Activated CD4-positive, alpha-beta memory T cell treated with anti-CD3 and anti-CD28 coated beads for 36 hours (primary cell): ENCODE measurements at regions of chr20 and their contacts with region 1.

Region 1: DNA sequence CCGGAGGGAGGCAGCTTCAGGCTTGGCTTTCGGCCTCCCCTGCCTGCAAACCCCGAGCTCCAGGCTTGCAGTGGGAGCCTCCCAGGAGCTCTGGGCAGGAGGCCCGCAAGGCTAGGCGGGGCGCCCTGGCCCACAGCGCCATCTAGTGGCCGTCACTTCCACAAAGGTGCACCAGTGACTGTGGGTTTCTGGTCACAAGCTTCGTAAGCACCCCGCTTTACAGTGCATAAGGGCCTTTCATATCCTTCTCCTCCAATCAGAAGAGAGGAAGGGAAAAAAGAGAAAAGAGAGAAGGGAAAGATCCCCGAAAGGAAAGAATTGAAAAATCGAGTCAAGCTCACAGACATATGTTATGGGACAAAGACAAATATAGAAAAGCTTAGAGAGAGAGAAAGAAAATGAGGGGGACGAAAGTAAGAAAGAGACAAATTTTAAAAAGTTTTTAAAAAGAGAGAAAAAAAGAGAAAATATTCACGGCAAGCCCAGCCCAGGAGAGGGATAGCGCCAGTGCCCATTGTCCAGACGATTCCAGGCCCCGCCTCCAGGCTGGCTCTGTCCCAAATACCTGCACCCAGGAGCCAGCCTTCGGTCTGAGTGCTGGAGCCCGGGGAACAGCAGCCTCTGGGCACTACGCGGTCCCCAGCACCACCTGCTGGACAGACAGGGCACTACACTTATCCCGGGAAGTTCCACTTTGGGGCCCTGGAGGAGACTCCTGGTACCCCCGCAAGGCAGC is 207.1 kb downstream of the PREX1 start:
- DNase-seq: peak; percentile 83
- H3K4me3 Mint-ChIP-seq: peak overlapping the region; percentile 20
- H3K27ac Mint-ChIP-seq: no peak overlapping the region
- H3K4me1 Mint-ChIP-seq: peaks cover 12% of the 10 kb centered on the region
- H3K27me3 Mint-ChIP-seq: no peaks in the 10 kb centered on the region

Region 2: GRCh38 chr20:47677635-47678453 is 942.8 kb before region 1 on chr20:
- CTCF ChIA-PET with region 1: interaction called, 67 read pairs
- POLR2A ChIA-PET with region 1: no interaction called
- intact Hi-C with region 1: loop called (anchors 1 kb)
- DNase-seq: peak; percentile 78
- H3K4me3 Mint-ChIP-seq: no peak overlapping the region
- H3K27ac Mint-ChIP-seq: no peak overlapping the region
- H3K4me1 Mint-ChIP-seq: no peaks in the 10 kb centered on the region
- H3K27me3 Mint-ChIP-seq: no peaks in the 10 kb centered on the region

Region 3: DNA sequence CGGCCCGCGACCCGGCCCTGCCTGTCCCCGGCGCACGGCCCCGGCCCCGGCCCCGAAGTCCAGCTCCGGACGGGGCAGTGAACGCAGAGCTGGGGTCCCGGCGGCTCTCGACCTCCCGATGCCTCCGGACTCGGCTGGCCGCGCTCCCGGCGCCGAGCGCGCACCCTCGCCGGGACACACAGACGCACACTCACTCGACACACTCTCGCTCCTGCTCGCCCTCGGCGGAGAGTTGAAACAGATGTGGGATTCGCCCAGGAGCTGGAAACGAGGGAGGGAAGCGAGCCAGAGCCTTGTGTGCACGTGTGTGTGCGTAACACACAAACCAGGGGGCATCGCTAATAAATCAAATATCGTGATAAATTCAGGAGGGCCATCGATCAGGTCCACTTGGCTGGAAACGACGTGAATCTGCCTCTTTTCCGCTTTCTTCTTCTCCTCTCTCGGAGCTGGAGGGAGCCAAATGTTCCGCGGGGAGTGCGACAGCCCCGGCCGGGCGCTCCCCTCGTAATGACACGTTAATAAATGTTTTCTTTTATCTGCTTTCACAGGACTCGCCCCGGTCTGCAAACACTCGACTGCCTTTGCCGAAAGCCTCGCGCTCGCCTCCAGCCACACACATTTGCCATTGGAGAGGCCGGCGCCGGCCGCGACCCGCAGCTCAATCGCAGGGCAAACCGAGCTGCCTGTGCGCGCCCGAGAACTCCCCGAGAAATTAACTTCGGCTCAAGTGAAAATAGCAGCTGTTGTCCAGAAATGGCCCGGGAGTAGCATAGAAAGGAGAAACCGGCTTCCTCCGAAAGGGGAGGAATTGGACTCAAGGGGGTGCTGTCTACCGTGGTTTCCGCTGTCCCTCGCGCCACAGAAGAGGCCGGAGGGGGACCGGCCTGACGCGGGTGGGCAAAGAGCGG is 834.6 kb before region 1 on chr20:
- CTCF ChIA-PET with region 1: interaction called, 6 read pairs
- POLR2A ChIA-PET with region 1: no interaction called
- intact Hi-C with region 1: loop called (anchors 1 kb)
- DNase-seq: peak; percentile 43
- H3K4me3 Mint-ChIP-seq: peak overlapping the region; percentile 64
- H3K27ac Mint-ChIP-seq: no peak overlapping the region
- H3K4me1 Mint-ChIP-seq: peaks cover 11% of the 10 kb centered on the region
- H3K27me3 Mint-ChIP-seq: peaks cover 51% of the 10 kb centered on the region

Region 4: GRCh38 chr20:48609491-48609978 is 11.2 kb before region 1 on chr20:
- CTCF ChIA-PET with region 1: interaction called, 11 read pairs
- POLR2A ChIA-PET with region 1: no interaction called
- intact Hi-C with region 1: no loop called
- DNase-seq: peak; percentile 24
- H3K4me3 Mint-ChIP-seq: no peak overlapping the region
- H3K27ac Mint-ChIP-seq: peak overlapping the region; percentile 14
- H3K4me1 Mint-ChIP-seq: peaks cover 11% of the 10 kb centered on the region
- H3K27me3 Mint-ChIP-seq: peaks cover 2% of the 10 kb centered on the region

Region 5: DNA sequence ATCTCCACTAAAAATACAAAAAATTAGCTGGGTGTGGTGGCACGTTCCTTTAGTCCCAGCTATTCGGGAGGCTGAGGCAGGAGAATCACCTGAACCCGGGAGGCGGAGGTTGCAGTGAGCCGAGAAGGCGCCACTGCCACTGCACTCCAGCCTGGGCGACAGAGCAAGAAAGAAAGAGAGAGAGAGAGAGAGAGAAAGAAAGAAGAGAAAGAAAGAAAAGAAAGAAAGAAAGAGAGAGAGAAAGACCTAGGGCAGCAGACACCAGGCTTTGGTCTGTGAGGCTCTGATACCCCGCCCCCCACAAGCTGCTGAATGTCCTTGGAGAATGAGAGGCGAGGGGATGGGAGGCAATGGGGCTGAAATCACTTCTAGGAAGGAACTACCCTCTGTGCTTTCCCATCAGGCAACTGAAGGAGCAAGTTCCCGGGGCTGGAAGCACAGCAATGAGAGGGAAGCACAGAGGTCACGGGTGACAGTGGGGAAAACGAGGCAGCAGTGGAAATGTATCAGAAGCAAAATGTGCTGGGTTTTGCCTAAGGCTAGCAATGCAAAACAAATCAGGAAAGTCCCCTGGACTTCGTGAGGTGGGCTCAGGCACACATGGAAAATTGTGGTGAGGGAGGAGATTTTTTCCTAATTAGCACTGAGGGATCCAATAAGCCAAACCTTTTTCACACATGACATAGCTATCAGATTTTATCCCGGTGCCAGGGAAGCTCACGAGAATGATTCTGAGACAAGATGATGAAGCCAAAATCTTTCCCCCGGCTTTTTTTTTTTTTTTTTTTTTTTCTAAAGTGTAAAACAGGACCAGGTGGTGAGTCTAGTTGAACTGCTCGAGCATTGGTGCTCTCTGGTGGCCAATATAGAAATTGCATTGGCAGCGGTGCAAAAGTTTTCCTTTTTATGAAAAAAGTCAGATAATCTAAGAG is 283.9 kb after region 1 on chr20:
- CTCF ChIA-PET with region 1: interaction called, 13 read pairs
- POLR2A ChIA-PET with region 1: no interaction called
- intact Hi-C with region 1: no loop called
- DNase-seq: peak; percentile 80
- H3K4me3 Mint-ChIP-seq: no peak overlapping the region
- H3K27ac Mint-ChIP-seq: peak overlapping the region; percentile 28
- H3K4me1 Mint-ChIP-seq: peaks cover 14% of the 10 kb centered on the region
- H3K27me3 Mint-ChIP-seq: no peaks in the 10 kb centered on the region